ENCODE measurements at regions of chr21 and their contacts with region 1.

Region 1: GRCh38 chr21:14382835-14383594 is at the start of gene HSPA13:
- DNase-seq: peak; percentile 99
- H3K4me3 ChIP-seq: peak within 1 kb of the TSS; percentile 88
- H3K27ac ChIP-seq: peak within 1 kb of the TSS; percentile 51
- H3K4me1 ChIP-seq: peaks cover 29% of the 10 kb centered on the region
- CTCF ChIP-seq: no peak
- total RNA-seq, gene HSPA13: 14.6 and 17.8 TPM in 2 replicates

Region 2: DNA sequence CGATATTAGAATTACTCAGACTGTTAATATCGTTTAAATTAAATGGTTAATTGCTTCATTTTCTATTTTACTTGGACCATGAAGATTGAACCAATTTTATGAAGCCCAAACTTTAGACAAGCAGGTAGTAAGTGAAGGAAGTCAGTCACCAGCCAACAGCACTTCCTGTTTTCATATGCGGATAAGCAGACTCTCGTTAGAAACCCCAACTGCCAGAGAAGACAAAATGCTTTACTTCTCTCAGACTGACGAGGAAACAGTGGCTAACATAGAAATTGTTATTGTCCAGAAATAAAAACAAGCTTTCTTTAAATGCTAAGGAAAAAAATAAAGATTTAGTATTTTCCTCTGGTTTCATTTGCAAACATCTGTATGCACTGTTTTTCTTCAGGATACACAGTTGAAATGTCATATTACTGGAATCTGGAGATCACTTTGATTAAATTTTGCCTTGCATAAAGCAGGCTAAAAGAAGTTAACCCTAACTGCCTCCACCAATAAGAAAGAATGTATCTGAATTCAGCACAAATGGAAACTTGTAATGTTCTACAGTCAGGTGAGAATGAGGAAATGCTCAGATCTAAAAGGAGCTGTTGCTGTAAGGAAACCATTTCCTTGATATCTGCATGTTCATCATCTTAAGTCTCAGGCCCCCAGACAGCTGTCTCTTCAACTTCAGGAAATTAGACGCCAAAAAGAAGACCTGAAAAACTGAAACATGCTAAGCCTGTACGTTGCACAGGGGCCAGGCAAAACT is 292.9 kb after region 1 on chr21:
- CTCF ChIA-PET with region 1: interaction called, 3 read pairs
- POLR2A ChIA-PET with region 1: interaction called, 10 read pairs
- intact Hi-C with region 1: loop called (anchors 5 kb)
- DNase-seq: peak; percentile 90
- H3K4me3 ChIP-seq: peak overlapping the region; percentile 60
- H3K27ac ChIP-seq: peak overlapping the region; percentile 99
- H3K4me1 ChIP-seq: peaks cover 62% of the 10 kb centered on the region
- CTCF ChIP-seq: no peak

Region 3: GRCh38 chr21:14864211-14865021 is 481.4 kb after region 1 on chr21:
- CTCF ChIA-PET with region 1: no interaction called
- POLR2A ChIA-PET with region 1: no interaction called
- intact Hi-C with region 1: no loop called
- DNase-seq: peak; percentile 9
- H3K4me3 ChIP-seq: no peak overlapping the region
- H3K27ac ChIP-seq: no peak overlapping the region
- H3K4me1 ChIP-seq: no peaks in the 10 kb centered on the region
- CTCF ChIP-seq: peak; percentile 66